Posterior vena cava (tissue), 2 donors: ENCODE measurements at regions of chr5 and their contacts with region 1.

Region 1: DNA sequence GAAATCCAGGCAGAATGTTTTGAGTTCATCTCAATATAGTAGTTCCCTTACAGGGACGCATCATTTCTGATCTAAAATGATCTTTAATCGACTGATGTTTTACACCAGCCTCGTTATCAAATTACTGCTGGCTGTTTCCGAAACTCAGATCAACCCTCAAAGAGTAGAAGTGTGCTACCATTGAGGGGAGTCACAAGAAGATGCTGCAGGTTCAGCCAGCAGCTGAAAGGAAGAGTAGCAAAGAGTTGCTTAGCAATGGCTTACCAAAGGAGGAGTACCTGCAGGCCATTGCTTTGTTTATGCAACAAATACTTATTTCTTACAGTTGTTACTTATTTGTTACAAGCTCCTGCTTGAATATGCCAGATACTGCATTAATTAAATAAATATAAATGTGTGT is 144.1 kb downstream of the EBF1 start:
- DNase-seq: no peak

Region 2: GRCh38 chr5:158979749-158980521 is 24.3 kb after region 1 on chr5:
- intact Hi-C with region 1: loop called in 1 of 2 experiments (anchors 1 kb)
- DNase-seq: peak; percentile 89